ENCODE measurements at regions of chr11 and their contacts with region 1.

Region 1: GRCh38 chr11:121917482-121917881 is 198.5 kb downstream of the BLID start:
- DNase-seq: no peak
- H3K4me3 ChIP-seq: no peak overlapping the region
- CTCF ChIP-seq: no peak

Region 2: GRCh38 chr11:121841487-121842191 is 75.8 kb before region 1 on chr11:
- CTCF ChIA-PET with region 1: no interaction called
- POLR2A ChIA-PET with region 1: no interaction called
- DNase-seq: peak; percentile 82
- H3K4me3 ChIP-seq: no peak overlapping the region
- CTCF ChIP-seq: no peak

Region 3: GRCh38 chr11:121892131-121892681 is 25.3 kb before region 1 on chr11:
- CTCF ChIA-PET with region 1: no interaction called
- POLR2A ChIA-PET with region 1: no interaction called
- DNase-seq: no peak
- H3K4me3 ChIP-seq: no peak overlapping the region
- CTCF ChIP-seq: no peak

Region 4: DNA sequence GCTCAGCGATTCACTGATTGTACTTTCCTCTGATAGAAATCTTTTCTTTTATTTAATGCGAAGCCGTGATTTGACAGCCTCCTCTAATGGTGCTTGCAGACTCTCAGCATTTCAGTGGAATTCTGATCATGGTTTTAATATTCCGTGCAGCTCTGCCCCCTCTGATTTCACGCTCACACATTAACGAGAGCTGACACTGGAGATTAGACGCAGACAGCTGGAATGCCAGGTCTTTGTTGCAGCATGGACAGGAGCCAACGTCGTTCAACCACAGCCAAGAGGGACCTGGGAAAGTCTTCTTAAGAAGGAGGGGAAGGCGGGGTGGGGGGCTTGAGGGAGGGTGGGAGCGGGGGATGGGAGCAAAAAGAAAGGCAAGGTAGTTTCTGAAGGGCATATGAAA is 12.1 kb after region 1 on chr11:
- CTCF ChIA-PET with region 1: interaction called, 12 read pairs
- POLR2A ChIA-PET with region 1: no interaction called
- DNase-seq: no peak
- H3K4me3 ChIP-seq: peak overlapping the region; percentile 37
- CTCF ChIP-seq: no peak

Region 5: GRCh38 chr11:121944556-121945230 is 27.2 kb after region 1 on chr11:
- CTCF ChIA-PET with region 1: no interaction called
- POLR2A ChIA-PET with region 1: no interaction called
- DNase-seq: no peak
- H3K4me3 ChIP-seq: no peak overlapping the region
- CTCF ChIP-seq: no peak

Measured in AG04449 (cell line).